Right ventricle myocardium inferior (tissue), 1 donor: ENCODE measurements at regions of chr3 and their contacts with region 1.

Region 1: DNA sequence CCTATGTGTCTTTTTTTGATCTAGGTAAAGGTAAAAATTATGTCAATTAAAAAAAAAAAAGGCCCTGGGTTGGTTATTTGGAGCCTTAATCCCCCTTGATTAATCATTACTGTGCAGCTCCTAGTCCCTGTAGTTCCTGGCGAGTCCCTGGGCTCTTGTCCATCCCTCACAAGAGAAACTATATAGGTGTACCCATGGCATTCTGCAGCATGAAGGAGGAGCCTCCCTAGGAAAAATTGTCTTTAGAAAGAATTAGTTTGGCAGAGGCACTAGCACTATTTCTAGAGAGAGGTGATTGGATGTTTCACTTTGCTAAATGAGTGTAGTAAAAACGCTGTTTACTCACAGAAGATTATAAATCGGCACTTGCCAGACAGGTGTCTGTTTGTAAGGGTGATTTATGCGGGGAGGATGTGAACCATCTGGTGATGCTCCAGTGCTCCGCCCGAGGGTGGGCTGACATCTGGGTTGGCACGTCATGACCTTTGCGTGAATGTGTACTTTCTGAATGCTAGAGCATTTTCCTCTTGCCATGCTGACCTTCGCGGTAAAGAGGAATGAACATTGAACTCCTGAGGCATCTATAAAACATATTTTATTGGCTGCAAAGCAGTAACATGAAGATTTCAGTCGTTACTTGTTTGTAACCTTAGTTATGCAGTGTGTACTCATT is 12.6 kb downstream of the PLCL2 start:
- DNase-seq: no peak
- ATAC-seq: no peak

Region 2: DNA sequence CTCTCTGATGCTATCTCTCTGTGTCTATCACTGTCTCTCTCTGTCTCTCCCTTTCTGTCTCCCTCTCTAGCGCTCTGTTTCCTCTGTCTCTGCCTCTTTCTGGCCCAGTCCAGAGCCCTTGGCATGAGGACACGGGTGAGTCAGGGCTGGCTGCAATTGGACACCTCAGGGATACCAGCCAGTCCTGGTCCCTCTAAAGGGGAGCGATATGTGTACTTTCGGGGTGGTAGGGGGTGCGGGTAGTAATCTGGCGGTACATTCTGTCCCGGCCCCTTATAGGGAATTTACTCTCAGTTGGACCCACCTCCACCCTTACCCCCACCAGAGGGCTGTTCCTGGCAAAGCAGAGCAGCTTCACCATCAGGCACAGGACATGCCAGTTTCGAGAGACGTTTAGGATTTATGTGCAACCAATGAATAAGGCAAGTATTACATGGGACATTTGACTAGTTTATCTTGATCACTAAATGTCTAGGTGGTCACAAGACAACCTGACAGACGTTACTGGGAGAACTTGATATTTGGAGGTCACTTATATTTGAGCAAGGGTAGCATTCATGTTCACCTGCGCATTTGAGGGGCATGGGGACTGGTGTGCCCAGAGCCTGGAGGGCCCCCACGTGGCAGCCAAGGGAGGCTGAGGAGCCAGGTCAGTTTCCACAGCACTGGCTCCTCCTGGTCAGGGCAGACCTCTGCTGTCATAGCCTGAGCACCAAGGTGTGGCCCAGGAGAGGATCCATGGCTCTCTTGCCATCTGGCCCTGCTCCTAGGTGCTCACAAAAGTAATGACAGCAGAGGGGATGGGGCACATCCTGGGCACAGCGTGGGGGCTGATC is 243.5 kb after region 1 on chr3:
- intact Hi-C with region 1: loop called (anchors 2 kb)
- DNase-seq: peak; percentile 71
- ATAC-seq: peak; percentile 72

Region 3: DNA sequence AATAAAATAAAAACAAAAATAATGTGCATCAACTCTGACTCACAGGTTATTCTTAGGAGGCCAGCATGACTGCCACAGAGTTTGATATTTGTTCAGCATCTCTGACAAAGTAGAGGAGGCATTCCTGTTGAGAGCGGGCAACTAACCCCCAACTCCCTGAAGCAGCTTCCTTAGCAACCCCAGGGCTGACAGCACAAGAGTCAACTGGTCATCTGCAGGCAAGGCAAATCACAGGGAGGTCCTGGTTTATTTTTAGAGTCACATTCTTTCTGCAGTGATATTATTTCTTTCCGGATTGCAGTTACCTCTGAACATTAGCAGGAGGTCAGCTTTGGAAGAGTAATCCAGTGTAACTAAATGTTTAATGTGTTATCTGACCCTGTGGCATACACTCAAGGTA is 260.3 kb after region 1 on chr3:
- intact Hi-C with region 1: loop called (anchors 5 kb)
- DNase-seq: peak; percentile 45
- ATAC-seq: peak; percentile 50